ENCODE measurements at regions of chr5 and their contacts with region 1.

Region 1: DNA sequence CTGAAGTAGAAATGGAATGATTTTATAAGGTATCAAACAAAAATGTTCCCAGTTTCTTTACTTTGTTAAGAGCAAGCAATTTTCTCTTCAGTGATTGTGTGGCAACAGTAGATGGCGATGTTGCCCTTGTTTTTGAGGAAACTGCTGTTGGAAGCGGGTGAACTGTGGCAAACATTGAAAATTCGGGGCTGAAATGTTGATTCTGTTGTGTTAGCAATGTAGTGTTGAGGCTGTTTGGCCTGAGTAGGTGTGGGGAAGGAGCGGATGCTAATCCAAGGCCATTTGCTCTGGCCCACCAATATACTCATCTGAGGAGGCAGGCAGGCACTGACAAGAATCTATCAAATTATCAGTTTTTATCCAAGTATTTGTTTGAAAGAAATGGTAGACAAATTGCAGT is 129.8 kb downstream of the SLC12A2 start:
- DNase-seq: peak; percentile 56
- H3K4me3 ChIP-seq: no peak overlapping the region
- H3K27ac ChIP-seq: no peak overlapping the region
- H3K4me1 ChIP-seq: no peaks in the 10 kb centered on the region
- CTCF ChIP-seq: peak; percentile 85

Region 2: DNA sequence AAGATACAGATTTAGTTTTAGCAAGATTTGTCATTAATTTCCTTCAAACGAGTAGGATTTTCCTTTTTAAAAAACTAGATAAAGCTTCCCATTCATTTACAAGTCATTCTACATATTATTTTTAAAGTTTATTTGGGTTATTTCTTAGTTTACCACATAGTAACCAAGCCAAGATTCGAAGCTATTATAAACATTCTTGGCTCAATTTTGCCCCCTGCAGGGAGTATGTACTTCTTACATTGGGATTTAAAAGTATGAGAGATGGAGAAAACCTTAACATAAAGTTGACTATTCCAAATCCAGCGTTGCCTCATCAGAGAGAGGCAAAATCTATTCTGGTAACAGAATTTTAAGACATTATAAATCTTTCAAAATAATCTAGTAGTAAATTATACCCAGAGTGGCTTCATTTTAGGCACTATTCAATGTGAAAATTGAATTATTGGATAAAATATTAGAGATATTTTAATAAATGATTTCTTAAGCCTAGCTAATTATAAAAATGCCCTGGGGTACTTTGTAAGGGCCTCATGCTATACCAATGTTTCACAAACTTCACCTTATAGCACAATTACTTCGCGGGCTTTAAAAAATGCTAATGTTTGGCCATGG is 285.6 kb after region 1 on chr5:
- CTCF ChIA-PET with region 1: no interaction called
- POLR2A ChIA-PET with region 1: no interaction called
- intact Hi-C with region 1: loop called (anchors 5 kb)
- DNase-seq: peak; percentile 19
- H3K4me3 ChIP-seq: no peak overlapping the region
- H3K27ac ChIP-seq: no peak overlapping the region
- H3K4me1 ChIP-seq: no peaks in the 10 kb centered on the region
- CTCF ChIP-seq: peak; percentile 65

Region 3: GRCh38 chr5:128674825-128675446 is 461.6 kb after region 1 on chr5:
- CTCF ChIA-PET with region 1: no interaction called
- POLR2A ChIA-PET with region 1: no interaction called
- intact Hi-C with region 1: loop called (anchors 5 kb)
- DNase-seq: peak; percentile 36
- H3K4me3 ChIP-seq: no peak overlapping the region
- H3K27ac ChIP-seq: no peak overlapping the region
- H3K4me1 ChIP-seq: no peaks in the 10 kb centered on the region
- CTCF ChIP-seq: peak; percentile 83

Region 4: DNA sequence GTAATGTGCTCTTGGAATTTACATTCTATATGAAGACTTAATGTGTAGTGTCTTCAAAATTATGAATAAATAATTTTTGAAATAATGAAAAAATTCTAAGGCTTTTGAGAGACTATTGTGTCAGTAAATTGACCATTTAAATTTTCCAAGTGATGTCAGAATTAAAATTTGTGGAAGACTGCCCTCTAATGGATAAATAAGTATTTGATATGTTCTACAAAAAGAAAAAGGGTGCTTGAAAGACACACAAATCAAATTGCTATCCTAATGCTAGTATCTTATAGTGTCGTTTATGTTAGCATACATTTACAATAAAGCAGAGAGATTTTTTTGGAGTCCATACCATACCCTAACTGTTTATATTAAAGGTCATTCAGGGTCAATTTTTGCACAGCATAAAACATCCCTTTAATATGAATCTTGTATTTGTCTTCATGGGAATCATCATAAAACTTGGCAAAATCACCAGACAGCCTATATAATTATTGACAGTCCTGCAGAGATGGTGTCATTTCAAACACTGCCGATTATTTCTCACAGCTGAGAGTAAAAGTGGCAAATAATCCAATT is 631.1 kb after region 1 on chr5:
- CTCF ChIA-PET with region 1: no interaction called
- POLR2A ChIA-PET with region 1: no interaction called
- intact Hi-C with region 1: loop called (anchors 2 kb)
- DNase-seq: no peak
- H3K4me3 ChIP-seq: no peak overlapping the region
- H3K27ac ChIP-seq: no peak overlapping the region
- H3K4me1 ChIP-seq: no peaks in the 10 kb centered on the region
- CTCF ChIP-seq: peak; percentile 73